Dorsolateral prefrontal cortex (tissue), 120 donors: ENCODE measurements at regions of chr1 and their contacts with region 1.

Region 1: DNA sequence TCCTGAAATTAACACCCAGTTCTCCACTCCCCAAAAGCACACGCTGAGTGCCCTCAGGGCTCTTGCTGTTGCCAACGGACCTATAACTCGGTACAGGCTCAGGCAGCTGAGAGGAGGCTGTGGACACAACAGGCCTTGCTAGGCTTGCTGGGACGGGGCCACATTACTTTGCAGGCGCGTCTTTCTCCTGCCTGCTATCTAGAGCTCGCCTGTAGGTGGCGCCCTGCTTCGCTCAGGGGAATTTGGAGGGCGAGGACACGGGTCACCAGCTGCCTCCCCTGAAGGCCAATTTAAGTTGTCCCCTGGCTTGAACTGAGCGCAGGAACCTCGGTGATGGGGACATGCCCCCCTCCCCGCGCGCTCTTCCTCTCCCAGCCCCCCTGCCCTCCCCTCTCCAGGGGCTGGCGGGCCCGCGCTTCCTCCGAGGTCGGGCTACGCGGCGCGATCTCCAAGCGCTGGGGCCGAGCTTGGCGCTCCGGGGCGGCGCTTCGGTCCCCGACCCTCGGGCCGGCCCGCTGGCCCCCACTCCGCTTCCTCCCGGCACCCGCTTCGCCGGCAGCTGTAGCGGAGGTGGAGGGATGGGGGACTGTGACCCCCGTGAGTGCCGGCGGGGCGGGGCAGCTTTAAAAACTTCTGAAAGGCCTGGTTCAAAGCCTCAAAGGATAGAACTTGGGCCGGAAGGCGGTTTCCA is 32.4 kb upstream of the NFIA start:
- DNase-seq: peak; percentile 86 to 92 (median 90)
- H3K4me3 ChIP-seq: peak overlapping the region; percentile 54 to 92 (median 81)
- H3K27ac ChIP-seq: peak overlapping the region; percentile 75 to 98 (median 94)
- H3K27me3 ChIP-seq: no peaks in the 10 kb centered on the region
- CTCF ChIP-seq: peak; percentile 90 to 99 (median 97)

Region 2: GRCh38 chr1:59971464-59971911 is 1078.5 kb before region 1 on chr1:
- intact Hi-C with region 1: loop called (anchors 10 kb)
- DNase-seq: peak; percentile 60 to 87 (median 74)
- H3K4me3 ChIP-seq: peak overlapping the region in 41 of 59 donors; percentile 2 to 57 (median 36)
- H3K27ac ChIP-seq: peak overlapping the region in 7 of 59 donors; percentile 10 to 71 (median 43)
- H3K27me3 ChIP-seq: no peaks in the 10 kb centered on the region
- CTCF ChIP-seq: peak; percentile 76 to 96 (median 91)

Region 3: DNA sequence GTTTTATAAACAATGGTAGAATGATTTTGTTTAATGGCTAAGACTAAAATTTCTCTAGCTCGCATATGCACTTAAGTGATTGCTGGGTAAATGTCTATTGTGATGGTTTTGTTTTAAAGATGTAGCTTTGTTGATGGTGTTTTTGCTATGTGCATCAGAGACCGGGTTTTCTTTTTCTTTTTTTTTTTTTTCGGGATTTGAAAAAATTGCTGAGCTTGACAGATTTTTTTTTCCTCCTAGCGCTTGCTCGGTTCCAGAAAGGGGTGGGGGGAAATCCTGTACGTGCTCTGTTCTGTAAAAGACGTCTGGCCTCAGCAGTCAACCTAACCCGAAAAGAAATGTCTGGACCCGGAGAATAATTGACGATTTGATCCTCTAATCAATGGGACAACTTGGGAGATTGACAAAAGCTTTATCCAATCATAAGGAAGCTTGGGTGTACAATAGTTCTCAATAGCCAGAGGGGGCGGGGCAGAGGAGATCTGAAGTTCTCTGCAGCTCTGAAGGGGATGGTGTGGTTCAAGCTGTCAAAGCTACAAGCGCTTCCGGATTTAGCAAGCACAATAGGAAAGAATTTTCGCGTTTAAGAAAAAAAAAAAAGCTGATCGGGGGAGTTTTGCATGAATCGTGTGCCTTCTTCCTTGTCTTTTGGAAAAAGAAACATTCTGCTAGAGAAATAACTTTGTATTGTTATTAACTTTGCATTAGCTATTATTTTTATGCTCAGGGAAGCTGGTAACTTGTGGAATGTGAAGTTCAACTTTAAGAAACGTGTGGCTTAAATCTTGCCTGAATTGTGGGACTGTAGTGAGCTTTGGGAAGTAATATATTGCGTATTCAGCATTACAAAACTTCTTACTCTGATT is 27.9 kb after region 1 on chr1:
- intact Hi-C with region 1: loop called (anchors 1 to 2 kb)
- DNase-seq: peak; percentile 56 to 90 (median 86)
- H3K4me3 ChIP-seq: peak overlapping the region; percentile 34 to 93 (median 71)
- H3K27ac ChIP-seq: peak overlapping the region; percentile 83 to 99 (median 96)
- H3K27me3 ChIP-seq: no peaks in the 10 kb centered on the region
- CTCF ChIP-seq: peak in 19 of 56 donors; percentile 5 to 51 (median 17)

Region 4: DNA sequence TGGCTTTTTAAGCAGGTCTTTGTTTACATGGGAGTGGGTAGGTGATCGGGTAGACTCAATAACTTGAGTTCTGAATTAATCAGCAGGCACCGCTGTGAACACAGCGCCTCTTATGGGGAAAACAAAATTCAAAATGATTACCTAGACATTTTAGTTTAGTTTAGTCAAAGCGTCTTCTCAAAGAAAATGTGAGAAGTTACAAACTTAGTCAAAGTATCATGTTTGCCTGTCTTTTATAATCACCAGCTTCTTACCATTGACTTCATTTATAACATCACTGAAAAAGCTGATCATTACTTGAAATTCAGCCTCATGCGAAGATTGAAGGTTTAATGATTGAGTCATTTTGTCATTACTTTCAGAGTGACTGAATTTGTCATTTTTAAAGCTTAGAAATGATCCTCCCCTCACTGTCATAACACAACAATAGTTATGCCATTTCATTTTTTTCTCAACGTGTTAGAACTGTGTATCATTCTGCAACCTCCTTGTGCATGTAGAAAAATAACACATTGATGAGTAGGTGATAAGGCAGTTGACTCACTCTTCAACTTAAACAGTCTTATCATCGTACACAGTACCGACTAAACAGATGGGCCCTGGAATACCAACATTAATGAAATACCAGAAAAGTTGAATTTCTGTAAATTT is 220.9 kb after region 1 on chr1:
- intact Hi-C with region 1: loop called in 1 of 2 experiments (anchors 10 kb)
- DNase-seq: no peak
- H3K4me3 ChIP-seq: no peak overlapping the region
- H3K27ac ChIP-seq: peak overlapping the region in 53 of 59 donors; percentile 3 to 92 (median 79)
- H3K27me3 ChIP-seq: no peaks in the 10 kb centered on the region
- CTCF ChIP-seq: peak in 16 of 56 donors; percentile 8 to 54 (median 28)

Region 5: DNA sequence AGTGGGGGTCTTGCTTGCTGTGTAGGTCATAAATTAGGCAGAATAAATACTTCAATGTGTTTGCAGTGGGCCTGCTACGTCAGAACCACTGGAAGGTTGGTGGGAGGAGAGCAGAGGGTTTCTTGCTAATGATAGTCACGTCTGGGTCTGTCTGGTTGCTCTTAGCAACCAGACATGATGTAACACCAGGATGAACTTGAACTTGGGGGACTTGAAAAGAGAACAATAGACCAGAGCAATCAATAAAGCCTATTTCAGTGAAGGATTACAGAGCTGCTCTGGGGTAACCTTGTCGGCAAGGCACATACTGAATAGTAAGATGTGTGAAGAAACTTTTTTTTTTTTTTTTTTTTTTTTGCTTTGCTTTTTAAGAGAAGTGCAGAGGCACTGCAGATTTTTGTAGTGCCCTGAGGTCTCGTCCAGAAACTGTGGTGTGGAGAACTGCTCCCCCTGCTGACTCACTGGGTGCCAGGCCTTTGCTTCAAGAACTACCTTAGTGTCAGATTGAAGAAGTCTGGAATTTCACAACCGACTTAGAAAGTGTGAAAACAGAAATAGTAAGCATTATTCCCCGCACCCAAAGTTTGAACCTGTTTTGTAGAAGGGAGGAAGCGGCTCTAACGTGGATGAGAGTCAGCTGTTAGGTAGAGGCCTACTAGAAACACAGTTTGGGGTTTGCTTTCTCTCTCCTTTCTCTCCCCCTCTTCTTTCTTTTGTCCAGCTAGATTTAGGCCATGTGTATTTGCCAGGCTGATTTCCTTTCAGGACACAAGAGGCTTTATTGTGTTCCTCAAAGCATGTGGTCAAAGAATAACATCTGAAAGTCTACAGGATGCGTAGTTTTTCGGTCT is 403.3 kb after region 1 on chr1:
- intact Hi-C with region 1: loop called (anchors 2 kb)
- DNase-seq: peak; percentile 67 to 90 (median 80)
- H3K4me3 ChIP-seq: peak overlapping the region in 11 of 59 donors; percentile 6 to 29 (median 13)
- H3K27ac ChIP-seq: peak overlapping the region in 58 of 59 donors; percentile 0 to 83 (median 68)
- H3K27me3 ChIP-seq: no peaks in the 10 kb centered on the region
- CTCF ChIP-seq: peak; percentile 23 to 87 (median 76)

Region 6: GRCh38 chr1:61724813-61725694 is 675.1 kb after region 1 on chr1 and contains the start of gene TM2D1:
- intact Hi-C with region 1: loop called in 1 of 2 experiments (anchors 10 kb)
- DNase-seq: peak; percentile 83 to 95 (median 90)
- H3K4me3 ChIP-seq: peak within 1 kb of the TSS; percentile 64 to 100 (median 94)
- H3K27ac ChIP-seq: peak within 1 kb of the TSS; percentile 16 to 95 (median 85)
- H3K27me3 ChIP-seq: no peaks in the 10 kb centered on the region
- CTCF ChIP-seq: peak in 26 of 56 donors; percentile 3 to 48 (median 24)
- total RNA-seq, gene TM2D1: 28.9 to 60.5 (median 44.1) TPM